Activated CD4-positive, alpha-beta memory T cell treated with anti-CD3 and anti-CD28 coated beads, Interleukin-2, amount 10 ng/mL, durations not matched to agents 7 days and 5 days (primary cell): ENCODE measurements at regions of chr10 and their contacts with region 1.

Region 1: GRCh38 chr10:61903221-61903927 is 1.9 kb downstream of the ARID5B start:
- DNase-seq: peak; percentile 82
- H3K4me3 Mint-ChIP-seq: peak overlapping the region; percentile 94
- H3K27ac Mint-ChIP-seq: peak overlapping the region; percentile 98
- H3K4me1 Mint-ChIP-seq: peaks cover 37% of the 10 kb centered on the region
- H3K27me3 Mint-ChIP-seq: no peaks in the 10 kb centered on the region

Region 2: DNA sequence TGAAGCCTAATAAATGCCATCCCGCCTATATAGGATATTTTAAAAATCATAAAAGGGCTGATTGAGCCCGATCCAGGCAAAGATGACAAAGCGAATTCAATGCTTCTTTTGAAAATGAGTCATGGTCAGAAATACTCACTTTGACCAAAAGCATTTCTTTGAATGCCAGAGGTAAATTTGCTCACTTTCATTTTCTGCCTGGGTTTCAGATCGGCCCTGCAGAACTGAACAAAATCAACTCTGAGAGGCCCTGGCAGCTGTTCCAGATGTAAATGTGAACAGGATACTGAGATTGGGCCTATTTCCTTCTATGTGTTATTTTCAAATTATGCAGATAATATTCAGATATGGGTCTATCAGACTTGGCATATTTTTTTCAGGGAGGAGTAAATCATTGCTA is 116.6 kb before region 1 on chr10:
- CTCF ChIA-PET with region 1: no interaction called
- POLR2A ChIA-PET with region 1: interaction called, 16 read pairs
- DNase-seq: peak; percentile 31
- H3K4me3 Mint-ChIP-seq: no peak overlapping the region
- H3K27ac Mint-ChIP-seq: peak overlapping the region; percentile 85
- H3K4me1 Mint-ChIP-seq: peaks cover 64% of the 10 kb centered on the region
- H3K27me3 Mint-ChIP-seq: no peaks in the 10 kb centered on the region

Region 3: GRCh38 chr10:61961278-61961677 is 57.9 kb after region 1 on chr10:
- CTCF ChIA-PET with region 1: interaction called, 7 read pairs
- POLR2A ChIA-PET with region 1: interaction called, 92 read pairs
- DNase-seq: peak; percentile 59
- H3K4me3 Mint-ChIP-seq: peak overlapping the region; percentile 39
- H3K27ac Mint-ChIP-seq: peak overlapping the region; percentile 90
- H3K4me1 Mint-ChIP-seq: peaks cover 81% of the 10 kb centered on the region
- H3K27me3 Mint-ChIP-seq: no peaks in the 10 kb centered on the region

Region 4: DNA sequence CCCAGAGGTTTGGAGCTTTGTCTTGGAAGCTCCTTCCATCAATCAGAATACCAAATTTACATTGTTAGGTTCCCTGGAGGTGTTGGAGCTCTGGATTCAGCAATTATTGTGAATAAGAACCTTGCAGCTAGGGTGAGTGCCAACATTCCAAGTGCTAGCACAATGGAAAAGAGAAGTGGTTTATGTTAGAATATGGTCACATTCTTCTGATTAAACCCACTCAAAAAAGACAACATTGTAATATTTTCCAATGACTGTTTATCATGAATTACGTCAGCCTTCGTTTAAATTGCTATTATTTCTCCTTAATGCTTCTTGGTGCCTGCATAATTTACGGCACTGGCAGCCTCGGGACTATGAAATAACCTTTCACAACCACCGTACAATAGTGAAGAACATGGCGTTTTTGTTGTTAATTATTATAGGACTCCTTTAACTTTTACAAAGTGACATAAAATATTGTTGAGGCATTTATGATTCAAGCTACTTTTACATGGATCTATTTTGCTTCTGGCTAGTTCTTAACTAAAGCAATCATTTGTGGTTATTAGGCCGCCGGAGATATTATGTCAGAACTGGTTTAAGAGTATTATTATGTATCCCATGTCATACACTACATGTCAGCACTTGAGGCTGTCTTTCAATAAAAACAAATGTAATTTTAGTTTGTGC is 115.8 kb after region 1 on chr10:
- CTCF ChIA-PET with region 1: interaction called, 3 read pairs
- POLR2A ChIA-PET with region 1: interaction called, 20 read pairs
- DNase-seq: no peak
- H3K4me3 Mint-ChIP-seq: no peak overlapping the region
- H3K27ac Mint-ChIP-seq: peak overlapping the region; percentile 71
- H3K4me1 Mint-ChIP-seq: peaks cover 77% of the 10 kb centered on the region
- H3K27me3 Mint-ChIP-seq: no peaks in the 10 kb centered on the region

Region 5: DNA sequence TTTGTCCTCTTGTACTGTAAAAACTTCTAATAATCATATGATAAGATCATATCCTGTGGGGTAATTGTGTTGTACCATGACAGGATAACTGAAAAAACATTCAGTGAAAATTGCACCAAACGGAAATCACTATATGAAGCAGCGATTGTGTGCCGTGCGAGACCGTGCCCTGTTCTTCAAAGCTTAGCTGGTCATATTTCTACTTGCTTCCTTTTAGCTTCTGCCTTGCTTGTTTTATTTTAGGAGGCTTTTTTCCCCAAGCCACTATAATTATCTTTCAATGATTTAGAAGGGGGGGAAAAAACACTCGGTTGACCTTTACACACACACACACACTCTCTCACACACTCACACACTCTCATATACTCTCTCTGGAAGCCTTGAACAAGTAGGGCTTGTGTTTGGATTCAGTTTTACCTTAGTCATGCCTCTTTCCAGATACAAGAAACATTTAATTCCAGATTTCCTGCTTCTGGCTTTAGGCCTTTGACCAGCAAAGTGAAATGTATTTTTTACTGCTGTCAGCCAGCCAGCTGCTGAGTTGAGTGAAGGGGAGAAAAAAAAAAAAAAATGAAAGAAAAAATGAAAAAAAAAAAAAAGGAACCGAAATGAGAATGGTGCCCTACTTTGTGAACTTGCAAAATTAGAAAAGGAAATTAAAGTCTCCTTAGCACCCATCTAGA is 179.5 kb after region 1 on chr10:
- CTCF ChIA-PET with region 1: interaction called, 6 read pairs
- POLR2A ChIA-PET with region 1: interaction called, 15 read pairs
- DNase-seq: peak; percentile 69
- H3K4me3 Mint-ChIP-seq: peak overlapping the region; percentile 61
- H3K27ac Mint-ChIP-seq: peak overlapping the region; percentile 92
- H3K4me1 Mint-ChIP-seq: peaks cover 81% of the 10 kb centered on the region
- H3K27me3 Mint-ChIP-seq: no peaks in the 10 kb centered on the region